Esophagus muscularis mucosa (tissue), 4 donors: ENCODE measurements at regions of chrX and their contacts with region 1.

Region 1: GRCh38 chrX:155767051-155767875 is 113.9 kb upstream of the VAMP7 start:
- DNase-seq: no peak
- H3K4me3 ChIP-seq: peak overlapping the region; percentile 47 to 59 (median 50)
- H3K27ac ChIP-seq: peak overlapping the region; percentile 40 to 66 (median 52)
- H3K4me1 ChIP-seq: peaks cover 0 to 7% (median 3%) of the 10 kb centered on the region in 4 donors
- H3K27me3 ChIP-seq: no peaks in the 10 kb centered on the region
- CTCF ChIP-seq: no peak
- EP300 ChIP-seq: no peak
- POLR2A ChIP-seq: no peak

Region 2: GRCh38 chrX:155695419-155695818 is 71.8 kb before region 1 on chrX:
- intact Hi-C with region 1: loop called (anchors 10 kb)
- DNase-seq: no peak
- H3K4me3 ChIP-seq: no peak overlapping the region
- H3K27ac ChIP-seq: no peak overlapping the region
- H3K4me1 ChIP-seq: no peaks in the 10 kb centered on the region
- H3K27me3 ChIP-seq: no peaks in the 10 kb centered on the region
- CTCF ChIP-seq: no peak
- EP300 ChIP-seq: no peak
- POLR2A ChIP-seq: no peak